HepG2 (cell line): ENCODE measurements at regions of chr6 and their contacts with region 1.

Region 1: GRCh38 chr6:137866914-137867684 is at the start of gene TNFAIP3:
- DNase-seq: peak; percentile 94
- ATAC-seq: peak; percentile 85
- H3K4me3 ChIP-seq: peak within 1 kb of the TSS; percentile 75 to 100 (median 92)
- H3K27ac ChIP-seq: peak within 1 kb of the TSS; percentile 92
- H3K4me1 ChIP-seq: peaks cover 75% of the 10 kb centered on the region
- H3K27me3 ChIP-seq: no peaks in the 10 kb centered on the region; a peak in 1 of 5 replicates
- CTCF ChIP-seq: peak; percentile 85
- EP300 ChIP-seq: peak in 1 of 2 experiments; percentile 71; a peak in 2 of 4 replicates
- POLR2A ChIP-seq: peak; percentile 88 to 95
- RAD21 ChIP-seq: peak; percentile 99
- total RNA-seq, gene TNFAIP3: 24.7 and 28.2 TPM in 2 replicates

Region 2: DNA sequence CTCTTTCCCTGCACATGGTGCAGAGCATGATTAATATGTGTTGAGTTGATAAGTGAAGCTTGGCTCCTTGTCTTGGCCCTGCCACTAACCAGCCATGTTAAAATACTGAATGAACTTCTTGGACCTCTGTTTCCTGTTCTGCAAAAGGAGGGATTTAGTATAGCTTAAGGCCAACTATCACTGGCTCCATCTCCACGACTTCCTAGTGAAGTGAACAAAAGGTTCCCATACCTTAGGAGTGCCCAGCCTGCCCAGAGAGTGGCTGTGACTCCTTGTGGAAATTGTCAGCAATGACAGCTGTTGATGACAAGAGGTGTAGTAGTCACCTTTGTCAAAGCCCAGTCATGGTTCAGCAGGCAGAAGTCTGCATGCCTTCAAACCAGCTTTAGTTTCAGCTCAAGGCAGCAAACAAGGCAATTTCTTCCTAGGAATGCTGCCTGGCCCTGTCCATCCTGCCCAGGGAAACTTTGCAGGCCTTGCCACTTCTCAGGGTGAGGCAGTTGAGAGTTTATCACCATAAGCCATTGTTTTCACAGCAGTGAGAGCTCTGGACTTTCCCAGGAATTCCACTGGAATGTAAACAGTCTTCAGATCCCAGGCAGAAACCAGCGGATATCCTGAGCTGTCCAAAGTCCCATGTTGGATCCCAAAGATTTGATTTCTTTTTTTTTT is 169.7 kb before region 1 on chr6:
- CTCF ChIA-PET with region 1: interaction called, 5 read pairs
- POLR2A ChIA-PET with region 1: interaction called, 11 read pairs
- in situ Hi-C with region 1: no loop called
- intact Hi-C with region 1: no loop called
- DNase-seq: peak; percentile 94
- ATAC-seq: peak; percentile 96
- H3K4me3 ChIP-seq: peak overlapping the region in 1 of 3 experiments; percentile 8; a peak in 1 of 6 replicates
- H3K27ac ChIP-seq: peak overlapping the region; percentile 66
- H3K4me1 ChIP-seq: peaks cover 90% of the 10 kb centered on the region
- H3K27me3 ChIP-seq: no peaks in the 10 kb centered on the region
- CTCF ChIP-seq: peak; percentile 67
- EP300 ChIP-seq: peak in 1 of 2 experiments; percentile 91; a peak in 2 of 4 replicates
- POLR2A ChIP-seq: no peak
- RAD21 ChIP-seq: peak; percentile 72

Region 3: DNA sequence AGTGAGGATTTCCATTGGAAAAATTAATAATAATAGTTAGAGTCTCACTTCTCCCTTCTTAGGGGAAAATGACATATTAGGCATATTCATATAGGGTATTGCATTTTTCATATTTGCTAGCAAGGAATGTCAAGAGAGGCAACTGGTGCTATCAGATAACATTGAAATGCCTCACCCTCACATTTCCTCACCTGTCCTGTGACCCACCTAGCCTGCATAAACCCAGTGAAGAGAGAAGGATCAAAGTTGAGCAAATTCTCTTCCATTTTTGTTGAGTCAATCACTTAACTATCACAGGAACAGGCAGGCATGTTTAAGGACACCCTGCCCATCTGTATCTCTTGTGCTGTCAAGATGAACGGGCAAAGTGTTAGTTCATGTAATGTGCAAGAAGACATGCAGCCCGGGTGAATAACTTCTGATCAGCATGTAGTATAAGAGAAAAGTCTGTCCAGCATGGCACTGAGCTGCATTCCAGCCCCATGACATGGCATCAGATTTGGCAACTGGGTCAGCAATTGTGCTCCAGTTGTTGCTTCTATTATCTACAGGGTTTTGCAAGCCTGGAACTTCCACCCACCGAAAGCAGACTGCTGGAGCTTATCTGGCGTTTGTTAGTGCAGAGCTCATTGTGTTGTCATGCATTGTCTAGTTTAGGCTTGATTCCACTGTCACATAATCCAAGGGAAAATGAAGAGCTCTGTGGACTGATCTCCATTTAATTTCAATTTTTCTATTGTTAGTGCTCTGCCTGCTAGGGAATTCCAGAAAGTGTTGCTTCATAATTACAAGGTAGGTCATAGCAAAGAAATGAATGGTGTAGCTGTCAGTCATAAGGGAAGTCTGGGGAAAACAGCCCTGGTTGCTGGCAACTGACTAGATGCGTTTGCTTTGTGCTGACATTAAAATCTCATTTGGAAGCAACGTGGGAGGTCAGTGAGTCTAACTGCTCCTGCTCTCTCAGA is 138.4 kb before region 1 on chr6:
- CTCF ChIA-PET with region 1: interaction called, 5 read pairs
- POLR2A ChIA-PET with region 1: interaction called, 33 read pairs
- in situ Hi-C with region 1: no loop called
- intact Hi-C with region 1: loop called (anchors 1 kb)
- DNase-seq: peak; percentile 92
- ATAC-seq: peak; percentile 43
- H3K4me3 ChIP-seq: no peak overlapping the region
- H3K27ac ChIP-seq: peak overlapping the region; percentile 89
- H3K4me1 ChIP-seq: peaks cover 99% of the 10 kb centered on the region
- H3K27me3 ChIP-seq: no peaks in the 10 kb centered on the region
- CTCF ChIP-seq: no peak
- EP300 ChIP-seq: peak in 1 of 2 experiments; percentile 58; a peak in 1 of 4 replicates
- POLR2A ChIP-seq: no peak
- RAD21 ChIP-seq: no peak

Region 4: GRCh38 chr6:137799950-137800568 is 67.0 kb before region 1 on chr6:
- CTCF ChIA-PET with region 1: interaction called, 7 read pairs
- POLR2A ChIA-PET with region 1: interaction called, 17 read pairs
- in situ Hi-C with region 1: loop called (anchors 10 kb)
- intact Hi-C with region 1: loop called (anchors 2 kb)
- DNase-seq: peak; percentile 59
- ATAC-seq: peak; percentile 41; the same call in 2 of the 3 replicates
- H3K4me3 ChIP-seq: no peak overlapping the region
- H3K27ac ChIP-seq: no peak overlapping the region
- H3K4me1 ChIP-seq: peaks cover 100% of the 10 kb centered on the region
- H3K27me3 ChIP-seq: no peaks in the 10 kb centered on the region
- CTCF ChIP-seq: peak; percentile 58
- EP300 ChIP-seq: no peak
- POLR2A ChIP-seq: no peak
- RAD21 ChIP-seq: peak; percentile 52

Region 5: GRCh38 chr6:137944793-137945498 is 77.8 kb after region 1 on chr6:
- CTCF ChIA-PET with region 1: interaction called, 5 read pairs
- POLR2A ChIA-PET with region 1: interaction called, 5 read pairs
- in situ Hi-C with region 1: loop called (anchors 5 kb)
- intact Hi-C with region 1: loop called (anchors 1 kb)
- DNase-seq: peak; percentile 50
- ATAC-seq: peak; percentile 95
- H3K4me3 ChIP-seq: no peak overlapping the region
- H3K27ac ChIP-seq: no peak overlapping the region
- H3K4me1 ChIP-seq: peaks cover 5% of the 10 kb centered on the region
- H3K27me3 ChIP-seq: peaks cover 4 to 7% of the 10 kb centered on the region in 2 experiments; a peak in 2 of 5 replicates
- CTCF ChIP-seq: peak; percentile 90
- EP300 ChIP-seq: no peak
- POLR2A ChIP-seq: no peak
- RAD21 ChIP-seq: peak; percentile 84

Region 6: DNA sequence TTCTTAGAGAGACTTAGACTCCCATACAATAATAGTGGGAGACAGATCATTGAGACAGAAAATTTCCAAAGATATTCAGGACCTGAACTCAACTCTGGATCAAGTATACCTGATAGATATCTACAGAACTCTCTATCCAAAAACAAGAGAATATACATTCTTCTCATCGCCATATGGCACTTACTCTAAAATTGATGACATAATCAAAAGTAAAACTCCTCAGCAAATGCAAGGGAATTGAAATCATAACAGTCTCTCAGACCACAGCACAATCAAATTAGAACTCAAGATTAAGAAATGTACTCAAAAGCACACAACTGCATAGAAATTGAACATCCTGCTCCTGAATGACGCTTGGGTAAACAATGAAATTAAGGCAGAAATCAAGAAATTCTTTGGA is 211.4 kb after region 1 on chr6:
- CTCF ChIA-PET with region 1: no interaction called
- POLR2A ChIA-PET with region 1: no interaction called
- in situ Hi-C with region 1: no loop called
- intact Hi-C with region 1: no loop called
- DNase-seq: no peak
- ATAC-seq: no peak
- H3K4me3 ChIP-seq: no peak overlapping the region
- H3K27ac ChIP-seq: no peak overlapping the region
- H3K4me1 ChIP-seq: no peaks in the 10 kb centered on the region
- H3K27me3 ChIP-seq: no peaks in the 10 kb centered on the region
- CTCF ChIP-seq: no peak
- EP300 ChIP-seq: no peak
- POLR2A ChIP-seq: no peak
- RAD21 ChIP-seq: no peak